ENCODE measurements at regions of chr1 and their contacts with region 1.

Region 1: DNA sequence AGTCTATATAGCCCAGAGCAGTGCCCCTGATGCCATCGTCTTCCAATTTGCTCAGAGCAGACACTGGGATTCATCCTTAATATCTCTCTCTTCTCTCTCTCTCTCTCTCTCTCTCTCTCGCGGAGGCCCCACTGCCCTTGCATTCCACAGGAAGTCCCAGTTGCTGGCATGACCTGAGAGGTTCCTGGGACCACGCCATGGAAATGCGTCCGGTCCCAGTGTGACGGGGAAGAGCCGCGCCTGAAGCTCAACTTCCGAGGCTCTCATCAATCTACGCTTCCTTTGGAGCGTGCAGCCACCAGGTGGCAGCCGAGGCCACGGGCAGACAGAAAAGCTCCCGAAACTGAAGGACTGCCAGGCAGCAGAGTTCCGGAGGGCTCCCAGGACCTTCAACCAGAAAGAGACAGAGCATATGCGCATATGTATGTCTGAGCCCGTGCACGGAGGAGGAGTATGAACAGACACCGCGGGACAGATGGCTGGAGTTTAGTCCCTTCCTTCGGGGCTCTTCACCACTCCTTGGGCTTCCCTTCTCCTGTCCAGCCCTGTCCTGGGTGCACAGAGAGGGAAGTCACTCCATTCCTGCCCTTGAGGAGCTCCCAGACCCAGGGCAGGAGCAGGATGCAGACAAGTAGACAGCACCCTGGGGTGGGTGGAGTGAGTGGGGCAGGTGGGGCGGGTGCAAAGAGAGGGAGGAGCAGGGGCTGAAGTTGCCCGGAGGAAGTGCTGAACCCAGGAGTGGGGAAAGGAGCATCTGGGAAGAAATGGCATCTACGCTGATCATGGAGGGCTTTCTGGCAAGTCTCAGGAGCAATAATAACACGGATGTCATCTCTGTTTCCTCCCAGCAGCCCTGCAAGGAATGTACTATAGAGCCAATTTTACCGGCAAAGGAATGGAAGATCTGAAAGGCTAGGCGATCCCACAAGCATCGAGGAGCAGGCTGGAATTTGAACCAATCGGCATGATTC is 10.5 kb downstream of the PDZK1IP1 start:
- DNase-seq: peak; percentile 74 to 98 (median 86)

Region 2: GRCh38 chr1:46747683-46748288 is 431.5 kb before region 1 on chr1:
- intact Hi-C with region 1: loop called (anchors 10 kb)
- DNase-seq: peak in 5 of 10 donors; percentile 11 to 82 (median 20)

Region 3: GRCh38 chr1:47521034-47521881 is 342.0 kb after region 1 on chr1:
- intact Hi-C with region 1: no loop called
- DNase-seq: peak in 1 of 10 donors; percentile 35

Measured in posterior cingulate gyrus (tissue), 11 donors.